ENCODE measurements at regions of chr14 and their contacts with region 1.

Region 1: GRCh38 chr14:100285021-100285912 is 21.0 kb downstream of the SLC25A29 start:
- DNase-seq: peak; percentile 57
- H3K4me3 Mint-ChIP-seq: peak overlapping the region; percentile 77
- H3K27ac Mint-ChIP-seq: peak overlapping the region; percentile 64
- H3K4me1 Mint-ChIP-seq: peaks cover 24% of the 10 kb centered on the region
- H3K27me3 Mint-ChIP-seq: no peaks in the 10 kb centered on the region
- CTCF ChIP-seq: peak; percentile 97

Region 2: DNA sequence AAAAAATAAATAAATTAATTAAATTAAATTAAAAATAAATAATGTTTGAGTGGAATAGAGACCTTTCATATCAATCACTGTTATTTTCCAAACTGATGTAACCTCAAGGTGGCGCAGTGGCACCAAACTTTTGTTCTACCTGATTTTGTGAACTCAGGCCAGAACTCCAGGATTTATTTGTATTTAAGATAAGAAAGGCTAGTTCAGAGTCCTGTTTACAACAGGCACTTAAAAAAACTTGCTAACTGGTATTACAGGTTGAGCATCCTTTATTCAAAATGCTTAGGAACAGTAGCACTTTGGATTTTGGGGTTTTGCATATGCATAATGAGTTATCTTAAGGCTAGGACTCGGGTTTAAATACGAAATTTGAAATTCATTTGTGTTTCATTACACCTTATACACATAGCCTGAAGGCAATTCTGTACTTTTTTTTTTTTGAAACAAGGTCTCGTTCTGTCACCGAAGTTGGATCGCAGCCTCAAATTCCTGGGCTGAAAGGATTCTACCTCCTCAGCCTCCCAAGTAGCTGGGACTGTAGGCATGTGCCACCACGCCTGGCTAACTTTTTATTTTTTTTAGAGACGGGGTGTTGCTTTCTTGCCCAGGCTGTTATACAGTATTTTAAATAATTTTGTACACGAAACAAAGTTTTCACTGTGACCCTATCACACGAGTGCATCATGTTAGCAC is 13.9 kb before region 1 on chr14:
- CTCF ChIA-PET with region 1: interaction called, 14 read pairs
- POLR2A ChIA-PET with region 1: interaction called, 5 read pairs
- intact Hi-C with region 1: no loop called
- DNase-seq: peak; percentile 55
- H3K4me3 Mint-ChIP-seq: no peak overlapping the region
- H3K27ac Mint-ChIP-seq: no peak overlapping the region
- H3K4me1 Mint-ChIP-seq: peaks cover 17% of the 10 kb centered on the region
- H3K27me3 Mint-ChIP-seq: no peaks in the 10 kb centered on the region
- CTCF ChIP-seq: peak; percentile 40

Measured in MCF 10A (cell line).